ENCODE measurements at regions of chr18 and their contacts with region 1.

Region 1: DNA sequence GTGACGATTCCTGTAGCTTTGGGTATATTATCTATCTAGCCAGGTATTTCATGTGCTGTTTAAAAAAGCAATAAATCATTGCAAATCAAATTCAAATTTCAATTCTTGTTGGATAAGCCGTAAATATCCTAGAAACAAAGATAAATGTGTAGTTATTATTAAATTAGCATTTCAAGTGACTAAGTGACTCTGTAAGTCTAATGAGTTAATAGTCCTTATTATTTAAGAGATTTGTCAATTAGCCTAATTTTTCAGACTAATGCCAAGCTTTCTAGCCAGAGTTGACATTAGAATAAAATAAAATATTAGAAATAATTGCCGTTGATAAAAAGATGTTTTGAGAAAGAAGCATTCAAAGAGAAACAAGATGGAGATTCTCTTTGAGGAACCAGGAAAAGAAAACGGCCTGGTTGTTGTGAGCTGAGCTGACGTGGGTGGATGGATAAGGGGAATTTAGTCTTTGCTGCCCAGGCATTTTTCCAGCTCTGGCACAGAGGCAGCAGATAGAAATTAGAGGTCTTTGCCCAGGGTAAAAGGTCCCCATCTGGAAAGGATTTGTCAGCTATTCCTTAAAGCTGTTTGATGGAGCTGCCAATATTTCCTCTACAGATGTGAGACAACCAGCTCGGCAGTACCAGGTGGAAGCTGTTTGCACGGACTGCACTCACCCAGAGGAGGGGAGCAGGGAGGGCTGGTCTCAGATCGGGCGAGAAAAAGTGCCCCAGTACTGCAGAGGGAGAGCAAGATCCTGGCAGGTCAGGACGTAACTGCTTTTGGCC is 117.3 kb upstream of the SEC11C start:
- DNase-seq: peak in 1 of 2 donors; percentile 70
- H3K4me3 ChIP-seq: no peak overlapping the region
- H3K27ac ChIP-seq: peak overlapping the region; percentile 85 to 90
- H3K4me1 ChIP-seq: peaks cover 14 to 49% of the 10 kb centered on the region in 2 donors
- H3K27me3 ChIP-seq: no peaks in the 10 kb centered on the region
- CTCF ChIP-seq: no peak

Region 2: GRCh38 chr18:58960946-58961722 is 61.2 kb before region 1 on chr18:
- intact Hi-C with region 1: no loop called
- DNase-seq: peak in 1 of 2 donors; percentile 77
- H3K4me3 ChIP-seq: no peak overlapping the region
- H3K27ac ChIP-seq: peak overlapping the region; percentile 29 to 54
- H3K4me1 ChIP-seq: peaks cover 0 to 12% of the 10 kb centered on the region in 2 donors
- H3K27me3 ChIP-seq: no peaks in the 10 kb centered on the region
- CTCF ChIP-seq: no peak

Region 3: GRCh38 chr18:58998401-58999203 is 23.8 kb before region 1 on chr18:
- intact Hi-C with region 1: loop called (anchors 2 kb)
- DNase-seq: peak in 1 of 2 donors; percentile 91
- H3K4me3 ChIP-seq: peak overlapping the region in 1 of 2 donors; percentile 12
- H3K27ac ChIP-seq: peak overlapping the region; percentile 93 to 95
- H3K4me1 ChIP-seq: peaks cover 9 to 37% of the 10 kb centered on the region in 2 donors
- H3K27me3 ChIP-seq: no peaks in the 10 kb centered on the region
- CTCF ChIP-seq: peak in 1 of 3 experiments; percentile 41

Region 4: DNA sequence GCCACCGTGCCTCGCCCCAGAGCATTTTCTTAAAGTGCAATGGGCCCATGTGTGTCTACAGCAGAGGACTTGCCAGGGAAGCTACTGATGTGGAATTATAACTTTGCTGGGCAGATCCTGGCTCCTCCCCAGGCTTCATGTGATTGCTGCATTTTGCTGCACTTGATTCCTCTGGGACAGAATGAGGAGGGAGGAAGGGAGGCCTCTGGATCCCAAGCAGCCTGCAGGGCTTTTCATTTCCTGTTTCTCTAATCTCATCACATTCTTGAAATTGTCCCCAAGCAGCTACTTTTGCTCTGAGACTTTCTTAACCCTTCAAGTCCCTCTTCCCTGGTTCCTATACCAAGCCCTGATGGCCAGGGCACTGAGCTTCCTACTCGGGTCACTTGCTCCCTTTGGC is 17.1 kb before region 1 on chr18:
- intact Hi-C with region 1: loop called (anchors 2 kb)
- DNase-seq: peak in 1 of 2 donors; percentile 85
- H3K4me3 ChIP-seq: no peak overlapping the region
- H3K27ac ChIP-seq: peak overlapping the region; percentile 86 to 87
- H3K4me1 ChIP-seq: peaks cover 3 to 15% of the 10 kb centered on the region in 2 donors
- H3K27me3 ChIP-seq: no peaks in the 10 kb centered on the region
- CTCF ChIP-seq: no peak

Region 5: DNA sequence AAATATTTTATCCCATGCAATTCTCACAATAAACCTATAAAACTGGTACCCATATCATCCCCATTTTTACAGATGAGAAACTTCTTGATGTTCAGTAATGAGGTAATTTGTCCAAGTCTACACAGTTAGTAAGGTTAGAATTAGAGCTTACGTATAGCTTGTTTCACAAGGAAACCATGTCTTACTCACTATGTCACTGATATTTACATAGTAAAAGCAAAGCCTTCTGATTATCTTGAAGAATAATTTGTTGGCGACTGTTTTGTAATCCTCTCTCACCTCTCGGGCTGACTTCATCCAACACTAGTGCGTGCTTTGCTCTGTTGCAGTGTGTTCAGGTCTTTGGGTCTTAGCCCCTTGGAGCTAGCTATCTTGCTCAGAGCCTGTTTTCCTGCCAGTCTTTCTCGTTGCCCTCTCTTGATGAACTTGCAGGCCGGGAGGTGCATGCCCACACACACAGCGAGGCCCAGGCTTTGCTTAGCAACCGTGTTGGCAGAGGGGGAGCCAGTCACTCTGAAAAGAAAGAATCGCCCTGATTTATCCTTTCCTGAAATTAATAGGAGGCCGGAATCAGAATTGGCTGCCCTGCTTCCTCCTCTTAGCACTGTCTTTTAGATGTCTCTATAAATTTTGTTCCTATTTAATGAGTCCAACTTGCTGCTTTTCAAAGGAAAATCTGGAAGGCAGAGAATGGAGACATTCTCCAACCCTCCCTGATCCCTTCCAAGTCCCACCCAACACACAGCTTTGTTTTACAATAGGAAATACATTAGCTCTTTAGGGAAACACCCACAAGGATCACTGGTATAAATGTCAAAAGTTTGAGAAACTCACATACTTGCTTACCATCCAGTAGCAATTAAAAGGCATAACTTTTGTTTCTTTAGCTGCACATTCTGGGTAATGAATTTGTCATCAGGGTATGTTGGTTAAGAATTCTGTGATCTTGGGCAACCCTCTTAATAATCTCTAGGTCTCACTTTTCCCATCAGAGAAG is 19.8 kb after region 1 on chr18:
- intact Hi-C with region 1: loop called (anchors 2 kb)
- DNase-seq: peak in 1 of 2 donors; percentile 62
- H3K4me3 ChIP-seq: no peak overlapping the region
- H3K27ac ChIP-seq: peak overlapping the region; percentile 69 to 78
- H3K4me1 ChIP-seq: peaks cover 0 to 11% of the 10 kb centered on the region in 2 donors
- H3K27me3 ChIP-seq: no peaks in the 10 kb centered on the region
- CTCF ChIP-seq: no peak

Region 6: DNA sequence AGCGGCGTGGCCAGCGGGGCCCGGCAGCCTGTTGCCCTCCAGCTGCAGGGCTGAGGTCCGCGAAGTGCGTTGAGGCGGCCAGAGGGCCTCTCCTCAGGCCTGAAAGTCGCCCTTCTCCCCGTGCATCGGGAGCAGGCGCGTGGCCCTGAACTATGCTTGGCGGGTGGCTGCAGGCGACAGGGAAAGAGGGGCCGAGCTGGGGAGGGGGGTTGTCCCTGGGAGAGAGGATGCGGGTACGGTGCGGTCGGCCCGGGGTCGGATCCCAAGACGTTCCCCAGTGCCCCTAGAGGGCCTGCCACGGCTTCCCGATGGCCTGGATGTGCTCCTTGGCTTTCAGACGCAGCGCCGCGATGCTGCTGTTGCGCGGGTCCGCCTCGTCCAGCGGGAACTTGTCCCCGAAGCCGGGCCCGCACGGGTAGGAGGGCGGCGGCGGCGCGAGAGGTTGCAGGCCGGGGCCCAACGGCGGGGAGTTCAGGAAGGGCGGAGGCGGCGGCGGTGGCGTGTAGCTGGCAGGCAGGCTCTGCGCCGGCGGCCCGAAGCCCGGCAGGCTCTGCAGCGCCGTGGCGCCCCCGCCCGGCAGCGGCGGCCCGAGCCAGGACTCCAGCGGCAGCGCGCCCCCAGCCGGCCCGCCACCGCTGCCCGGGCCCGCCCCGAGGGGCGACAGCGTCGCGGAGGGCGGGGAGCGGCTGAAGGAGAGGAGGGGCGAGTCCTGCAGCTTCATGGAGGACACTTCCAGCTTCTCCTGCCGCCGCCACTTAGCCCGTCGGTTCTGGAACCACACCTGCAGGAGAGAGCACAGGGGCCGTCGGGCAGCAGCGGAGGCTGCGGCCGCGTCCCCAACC is 246.6 kb after region 1 on chr18:
- intact Hi-C with region 1: no loop called
- DNase-seq: no peak
- H3K4me3 ChIP-seq: peak overlapping the region; percentile 20 to 35
- H3K27ac ChIP-seq: no peak overlapping the region
- H3K4me1 ChIP-seq: peaks cover 0 to 5% of the 10 kb centered on the region in 2 donors
- H3K27me3 ChIP-seq: peaks cover 17% of the 10 kb centered on the region
- CTCF ChIP-seq: no peak

Measured in ascending aorta (tissue), 2 donors.